K562 (cell line): ENCODE measurements at regions of chr2 and their contacts with region 1.

Region 1: DNA sequence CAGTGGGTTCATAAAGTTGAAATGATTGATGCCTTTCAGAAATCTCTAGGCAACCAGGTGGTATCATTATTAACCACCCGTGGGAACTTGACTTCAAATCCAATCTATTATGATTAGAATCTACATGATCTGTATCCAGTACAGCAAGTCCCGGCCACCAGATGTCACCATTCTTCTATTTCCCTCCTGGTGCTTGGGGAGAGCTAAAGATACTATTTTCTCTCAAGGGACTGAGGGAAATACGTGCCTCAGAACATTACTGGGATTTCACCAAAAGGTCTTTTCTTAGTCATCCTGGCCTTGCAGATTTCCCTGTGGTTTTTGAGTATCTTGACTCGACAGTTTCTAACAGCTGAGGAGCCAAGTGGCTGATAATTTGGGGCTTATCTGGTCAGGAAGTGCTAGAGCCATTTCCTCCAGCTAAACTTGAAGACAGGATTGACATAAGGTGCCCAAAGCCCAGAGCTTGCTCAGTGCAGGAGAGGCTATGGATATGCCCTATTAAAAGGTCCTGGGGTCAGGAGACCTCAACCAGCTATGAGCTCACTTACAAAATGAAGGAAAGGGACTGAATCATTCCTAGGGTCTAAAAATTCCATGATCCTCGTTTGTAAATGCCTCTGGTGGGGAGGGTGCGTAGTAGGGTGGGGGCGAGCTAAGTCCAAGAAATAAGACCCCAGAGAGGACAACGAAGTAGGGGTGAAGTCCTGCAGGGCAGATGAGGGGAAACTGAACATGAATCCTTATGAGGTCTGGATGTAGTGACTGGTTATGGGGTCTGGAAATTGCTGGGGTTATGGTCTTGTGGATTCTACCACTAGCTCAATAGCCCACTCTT is 135.4 kb upstream of the MGAT5 start:
- DNase-seq: peak; percentile 66 to 93 (median 74)
- ATAC-seq: peak; percentile 80
- H3K4me3 ChIP-seq: no peak overlapping the region
- H3K27ac ChIP-seq: peak overlapping the region; percentile 43; the same call in 2 of the 3 replicates
- H3K4me1 ChIP-seq: peaks cover 11 to 23% of the 10 kb centered on the region in 2 experiments
- H3K27me3 ChIP-seq: peaks cover 0 to 3% of the 10 kb centered on the region in 2 experiments; a peak in 4 of 5 replicates
- CTCF ChIP-seq: peak; percentile 78 to 93 (median 80)
- EP300 ChIP-seq: peak; percentile 99
- POLR2A ChIP-seq: no peak
- RAD21 ChIP-seq: peak; percentile 99

Region 2: DNA sequence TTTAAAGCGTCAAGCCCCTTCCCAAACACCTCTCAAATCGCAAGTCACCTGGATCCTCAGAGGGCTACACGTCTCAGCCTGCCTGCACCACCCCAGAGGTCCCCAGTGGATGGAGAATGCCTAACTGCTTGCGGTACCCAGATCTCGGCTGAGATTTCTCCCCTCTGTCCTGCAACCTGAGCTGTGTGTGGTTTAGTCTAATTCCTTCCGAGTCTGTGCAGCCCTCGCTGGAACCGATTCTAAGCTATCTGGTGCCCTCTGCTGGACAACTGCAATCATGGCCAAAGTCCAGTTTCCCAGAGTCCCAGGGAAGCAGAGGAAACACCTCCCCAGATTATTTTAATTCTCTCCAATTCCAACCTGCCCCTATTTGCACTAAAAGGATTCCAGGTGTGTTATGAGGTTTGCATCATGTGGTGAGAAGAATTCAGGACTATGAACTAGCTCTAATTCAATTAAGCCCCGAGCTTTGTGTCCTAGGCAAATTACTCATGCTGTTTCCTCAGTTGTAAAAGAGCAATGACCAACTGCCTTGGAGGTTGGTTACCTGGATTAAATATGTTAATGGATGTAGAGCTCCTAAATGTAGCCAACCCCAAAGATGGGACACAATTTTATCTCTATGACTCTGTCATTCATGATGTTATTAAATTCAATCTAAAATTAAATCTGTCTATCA is 274.1 kb before region 1 on chr2:
- CTCF ChIA-PET with region 1: no interaction called
- POLR2A ChIA-PET with region 1: no interaction called
- in situ Hi-C with region 1: no loop called
- intact Hi-C with region 1: no loop called
- DNase-seq: peak; percentile 68 to 74 (median 70)
- ATAC-seq: peak; percentile 98
- H3K4me3 ChIP-seq: no peak overlapping the region
- H3K27ac ChIP-seq: no peak overlapping the region
- H3K4me1 ChIP-seq: no peaks in the 10 kb centered on the region
- H3K27me3 ChIP-seq: no peaks in the 10 kb centered on the region
- CTCF ChIP-seq: peak; percentile 72 to 87 (median 86)
- EP300 ChIP-seq: no peak
- POLR2A ChIP-seq: no peak
- RAD21 ChIP-seq: peak; percentile 79 to 87

Region 3: DNA sequence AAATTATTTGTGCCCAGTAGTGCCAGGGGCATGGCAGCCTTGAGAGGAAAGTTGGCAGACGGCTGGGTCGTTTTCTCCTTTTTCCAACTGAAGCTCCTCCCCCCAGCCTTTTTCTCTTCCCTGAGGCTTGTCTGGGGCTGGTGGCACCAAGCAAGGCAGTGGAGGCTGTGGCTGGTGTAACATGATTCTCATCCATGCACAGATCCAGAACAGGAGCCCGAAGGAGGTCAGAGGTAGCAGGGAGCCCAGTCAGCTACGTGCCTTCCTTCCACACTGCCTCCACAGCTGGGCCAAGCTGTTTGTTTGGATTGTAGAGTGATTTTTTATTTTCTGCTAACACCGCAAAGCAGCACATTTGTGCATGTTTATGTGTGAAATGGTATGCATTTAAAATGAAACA is 35.0 kb before region 1 on chr2:
- CTCF ChIA-PET with region 1: no interaction called
- POLR2A ChIA-PET with region 1: no interaction called
- in situ Hi-C with region 1: no loop called
- intact Hi-C with region 1: no loop called
- DNase-seq: no peak
- ATAC-seq: no peak
- H3K4me3 ChIP-seq: no peak overlapping the region
- H3K27ac ChIP-seq: no peak overlapping the region
- H3K4me1 ChIP-seq: no peaks in the 10 kb centered on the region
- H3K27me3 ChIP-seq: peaks cover 14 to 41% of the 10 kb centered on the region in 2 experiments
- CTCF ChIP-seq: no peak
- EP300 ChIP-seq: no peak
- POLR2A ChIP-seq: no peak
- RAD21 ChIP-seq: no peak

Region 4: GRCh38 chr2:134146620-134147019 is 28.1 kb after region 1 on chr2:
- CTCF ChIA-PET with region 1: no interaction called
- POLR2A ChIA-PET with region 1: interaction called, 4 read pairs
- in situ Hi-C with region 1: no loop called
- intact Hi-C with region 1: loop called (anchors 1 kb)
- DNase-seq: no peak
- ATAC-seq: no peak
- H3K4me3 ChIP-seq: no peak overlapping the region
- H3K27ac ChIP-seq: no peak overlapping the region
- H3K4me1 ChIP-seq: peaks cover 18 to 21% of the 10 kb centered on the region in 2 experiments
- H3K27me3 ChIP-seq: no peaks in the 10 kb centered on the region
- CTCF ChIP-seq: no peak
- EP300 ChIP-seq: no peak
- POLR2A ChIP-seq: no peak
- RAD21 ChIP-seq: no peak

Region 5: DNA sequence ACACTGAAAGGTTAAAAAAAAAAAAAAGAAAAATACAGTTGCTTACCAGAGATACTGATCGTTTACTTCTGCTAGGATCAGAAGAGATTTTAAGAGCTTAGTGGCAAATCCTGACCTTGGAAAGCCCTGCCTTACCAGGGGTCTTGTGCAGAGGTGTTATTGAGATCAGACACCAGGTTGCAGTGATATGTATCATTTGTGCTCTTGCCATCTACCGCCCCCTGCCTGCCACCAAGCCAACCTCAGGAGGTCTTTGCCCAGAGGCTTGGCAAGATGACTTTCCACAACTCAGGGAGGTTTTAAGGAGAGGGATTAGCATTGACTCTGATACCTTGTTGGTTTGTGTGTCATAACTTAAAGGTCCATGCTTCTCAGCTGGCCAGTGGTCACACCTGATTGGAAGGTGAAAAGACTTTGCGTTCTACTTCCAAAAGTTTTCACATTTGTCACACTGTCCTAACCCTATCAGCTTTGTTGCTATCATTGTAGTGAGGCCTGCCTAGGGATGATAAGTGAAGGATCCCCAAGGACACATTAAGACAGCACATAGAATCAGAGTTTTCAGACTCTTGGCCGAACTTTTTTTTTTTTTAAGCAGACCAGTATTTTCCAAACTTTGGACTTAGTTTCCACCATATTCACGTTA is 89.2 kb after region 1 on chr2:
- CTCF ChIA-PET with region 1: interaction called, 22 read pairs
- POLR2A ChIA-PET with region 1: interaction called, 5 read pairs
- in situ Hi-C with region 1: no loop called
- intact Hi-C with region 1: loop called (anchors 5 kb)
- DNase-seq: peak; percentile 49 to 66 (median 56)
- ATAC-seq: peak; percentile 99
- H3K4me3 ChIP-seq: no peak overlapping the region
- H3K27ac ChIP-seq: no peak overlapping the region
- H3K4me1 ChIP-seq: peaks cover 0 to 23% of the 10 kb centered on the region in 2 experiments; a peak in 3 of 5 replicates
- H3K27me3 ChIP-seq: no peaks in the 10 kb centered on the region
- CTCF ChIP-seq: peak; percentile 78 to 84 (median 80)
- EP300 ChIP-seq: no peak; the same call in 1 of the 2 replicates
- POLR2A ChIP-seq: no peak
- RAD21 ChIP-seq: peak; percentile 85 to 88

Region 6: GRCh38 chr2:134245340-134245984 is 127.0 kb after region 1 on chr2:
- CTCF ChIA-PET with region 1: interaction called, 23 read pairs
- POLR2A ChIA-PET with region 1: interaction called, 3 read pairs
- in situ Hi-C with region 1: loop called (anchors 10 kb)
- intact Hi-C with region 1: loop called (anchors 1 kb)
- DNase-seq: peak; percentile 35 to 78 (median 39)
- ATAC-seq: peak; percentile 89
- H3K4me3 ChIP-seq: no peak overlapping the region
- H3K27ac ChIP-seq: no peak overlapping the region
- H3K4me1 ChIP-seq: peaks cover 4 to 8% of the 10 kb centered on the region in 2 experiments; a peak in 2 of 5 replicates
- H3K27me3 ChIP-seq: no peaks in the 10 kb centered on the region
- CTCF ChIP-seq: peak; percentile 66 to 81 (median 77)
- EP300 ChIP-seq: no peak
- POLR2A ChIP-seq: no peak
- RAD21 ChIP-seq: peak; percentile 75 to 77

Region 7: GRCh38 chr2:134452042-134452733 is 333.7 kb after region 1 on chr2:
- CTCF ChIA-PET with region 1: interaction called, 27 read pairs
- POLR2A ChIA-PET with region 1: interaction called, 3 read pairs
- in situ Hi-C with region 1: loop called (anchors 10 kb)
- intact Hi-C with region 1: loop called (anchors 1 kb)
- DNase-seq: no peak
- ATAC-seq: no peak
- H3K4me3 ChIP-seq: no peak overlapping the region
- H3K27ac ChIP-seq: no peak overlapping the region
- H3K4me1 ChIP-seq: no peaks in the 10 kb centered on the region
- H3K27me3 ChIP-seq: peaks cover 0 to 25% of the 10 kb centered on the region in 2 experiments; a peak in 3 of 5 replicates
- CTCF ChIP-seq: no peak
- EP300 ChIP-seq: no peak
- POLR2A ChIP-seq: no peak
- RAD21 ChIP-seq: no peak